ENCODE measurements at regions of chr1 and their contacts with region 1.

Region 1: DNA sequence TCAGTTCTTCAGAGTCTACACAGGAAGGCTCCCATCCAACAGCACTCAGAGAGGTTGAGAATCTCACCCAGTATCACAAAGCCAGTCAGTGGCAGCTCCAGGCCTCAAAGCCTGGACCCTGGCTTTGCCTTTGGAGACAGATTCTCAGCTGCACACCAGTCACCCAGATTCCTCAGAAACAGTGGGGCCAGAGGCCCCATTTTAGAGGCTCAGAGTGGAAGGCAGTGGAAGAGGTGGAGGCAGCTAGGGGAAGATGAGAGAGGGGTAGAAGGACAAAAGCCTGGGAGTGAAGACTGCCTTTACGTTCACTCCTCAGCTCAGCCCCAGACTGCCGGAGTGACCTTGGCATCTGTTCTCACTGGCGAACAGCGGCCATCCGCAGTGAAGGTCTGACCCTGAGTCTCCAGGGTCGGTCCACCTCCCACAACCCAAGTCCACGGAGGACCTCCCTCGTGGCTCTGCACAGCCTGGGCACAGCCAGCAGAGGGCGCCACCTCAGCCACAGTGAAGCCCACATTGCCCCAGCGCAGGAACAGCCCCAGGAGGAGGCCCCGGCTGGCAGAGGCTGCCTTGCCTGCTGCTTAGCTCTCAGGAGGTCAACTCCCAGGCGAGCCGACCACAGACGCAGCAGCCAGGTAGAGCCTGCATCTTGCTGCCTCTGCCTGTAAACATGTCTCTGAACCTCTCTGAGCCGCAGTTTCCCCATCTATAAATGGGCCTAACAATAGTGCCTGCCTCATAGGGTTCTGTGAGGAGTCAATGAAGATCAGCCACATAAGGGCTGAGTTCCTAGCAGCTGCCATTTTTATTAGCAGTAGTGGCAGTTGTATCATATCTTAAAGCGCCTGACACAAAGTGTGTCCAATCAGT is 5.9 kb upstream of the FNDC5 start:
- DNase-seq: peak; percentile 35
- ATAC-seq: peak; percentile 71
- H3K4me3 ChIP-seq: no peak overlapping the region
- H3K27ac ChIP-seq: no peak overlapping the region
- H3K4me1 ChIP-seq: peaks cover 4% of the 10 kb centered on the region
- H3K27me3 ChIP-seq: peaks cover 4% of the 10 kb centered on the region
- CTCF ChIP-seq: peak; percentile 97

Region 2: GRCh38 chr1:32448773-32449456 is 427.7 kb before region 1 on chr1:
- CTCF ChIA-PET with region 1: no interaction called
- POLR2A ChIA-PET with region 1: no interaction called
- in situ Hi-C with region 1: no loop called
- intact Hi-C with region 1: loop called (anchors 10 kb)
- DNase-seq: no peak
- ATAC-seq: peak; percentile 74
- H3K4me3 ChIP-seq: no peak overlapping the region
- H3K27ac ChIP-seq: no peak overlapping the region
- H3K4me1 ChIP-seq: peaks cover 5% of the 10 kb centered on the region; the same call in 1 of the 2 replicates
- H3K27me3 ChIP-seq: no peaks in the 10 kb centered on the region
- CTCF ChIP-seq: peak; percentile 69

Region 3: GRCh38 chr1:32612189-32612881 is 264.2 kb before region 1 on chr1:
- CTCF ChIA-PET with region 1: no interaction called
- POLR2A ChIA-PET with region 1: no interaction called
- in situ Hi-C with region 1: no loop called
- intact Hi-C with region 1: no loop called
- DNase-seq: peak; percentile 69
- ATAC-seq: peak; percentile 100
- H3K4me3 ChIP-seq: peak overlapping the region; percentile 54 to 85
- H3K27ac ChIP-seq: peak overlapping the region; percentile 76
- H3K4me1 ChIP-seq: peaks cover 5% of the 10 kb centered on the region; the same call in 1 of the 2 replicates
- H3K27me3 ChIP-seq: no peaks in the 10 kb centered on the region
- CTCF ChIP-seq: no peak

Region 4: DNA sequence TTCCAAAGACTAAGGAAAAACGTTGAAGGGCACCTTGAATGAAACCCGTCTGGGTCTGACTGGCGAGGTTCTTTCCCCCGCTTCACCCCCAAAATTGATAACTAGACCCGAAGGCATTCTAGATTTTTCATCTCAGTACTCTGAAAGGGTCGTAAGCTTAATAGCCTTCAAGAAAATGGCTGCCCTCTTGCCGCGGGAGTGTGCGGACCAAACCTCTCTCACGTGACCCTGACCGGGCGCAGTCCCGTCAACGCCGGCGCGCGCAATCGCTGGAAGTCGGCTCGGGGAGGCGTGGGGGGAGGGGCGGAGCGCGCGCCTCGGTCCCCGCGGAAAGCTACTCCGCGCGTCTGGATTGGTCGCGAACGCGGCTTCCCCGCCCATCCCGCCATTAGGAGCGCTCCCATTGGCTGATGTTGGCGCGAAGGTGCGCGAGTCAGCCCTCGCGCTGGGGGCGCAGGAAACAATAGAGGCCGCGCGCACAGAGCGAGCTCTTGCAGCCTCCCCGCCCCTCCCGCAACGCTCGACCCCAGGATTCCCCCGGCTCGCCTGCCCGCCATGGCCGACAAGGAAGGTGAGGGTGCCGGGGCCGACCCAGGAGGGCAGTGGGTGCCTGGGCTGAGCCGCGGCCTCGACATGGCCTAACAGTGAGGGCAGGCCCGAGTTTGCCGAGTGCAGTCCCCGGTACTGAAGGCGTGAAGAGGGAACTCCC is 225.7 kb before region 1 on chr1 and contains the start of gene RBBP4:
- CTCF ChIA-PET with region 1: no interaction called
- POLR2A ChIA-PET with region 1: interaction called, 14 read pairs
- in situ Hi-C with region 1: no loop called
- intact Hi-C with region 1: no loop called
- DNase-seq: peak; percentile 83
- ATAC-seq: peak; percentile 96
- H3K4me3 ChIP-seq: peak within 1 kb of the TSS; percentile 93 to 100
- H3K27ac ChIP-seq: peak within 1 kb of the TSS; percentile 99
- H3K4me1 ChIP-seq: peaks cover 10% of the 10 kb centered on the region; the same call in 1 of the 2 replicates
- H3K27me3 ChIP-seq: no peaks in the 10 kb centered on the region
- CTCF ChIP-seq: no peak
- total RNA-seq, gene RBBP4: 376 TPM

Region 5: DNA sequence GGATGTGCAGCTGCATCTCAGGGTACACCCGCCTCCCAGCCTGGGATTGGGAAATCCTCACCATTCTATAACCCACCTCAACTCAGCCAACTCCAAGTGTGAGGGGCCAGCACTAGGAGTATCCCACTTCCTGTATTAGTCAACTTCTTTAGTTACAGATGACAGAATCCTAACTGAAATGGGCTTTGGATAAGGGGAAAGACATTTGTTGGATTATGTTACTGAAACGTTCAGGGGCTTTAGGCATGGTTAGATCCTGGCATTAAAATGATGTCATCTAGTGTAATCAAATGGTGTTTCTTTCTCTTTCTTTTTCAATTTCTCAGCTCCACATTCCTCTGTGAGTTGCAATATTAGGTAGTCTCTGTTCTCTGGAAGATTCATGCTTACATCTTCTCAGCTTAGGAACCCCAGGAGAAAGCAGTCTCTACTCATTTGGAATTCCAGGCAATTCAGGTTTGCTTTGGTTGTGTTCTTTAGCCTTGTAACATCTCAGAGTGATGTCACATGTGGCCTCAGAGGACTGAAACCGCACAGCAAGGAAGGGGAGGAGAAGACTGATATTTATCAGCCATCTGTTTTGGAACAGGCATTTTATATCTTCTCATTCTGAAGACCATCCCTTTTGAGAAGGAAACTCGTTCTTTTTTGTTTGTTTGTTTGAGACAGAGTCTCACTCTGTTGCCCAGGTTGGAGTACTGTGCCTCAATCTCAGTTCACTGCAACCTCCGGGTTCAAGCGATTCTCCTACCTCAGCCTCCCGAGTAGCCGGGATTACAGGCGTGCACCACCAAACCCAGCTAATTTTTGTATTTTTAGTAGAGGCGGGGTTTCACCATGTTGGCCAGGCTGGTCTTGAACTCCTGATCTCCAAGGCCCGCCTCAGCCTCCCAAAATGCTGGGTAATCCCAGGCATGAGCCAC is 43.5 kb after region 1 on chr1:
- CTCF ChIA-PET with region 1: no interaction called
- POLR2A ChIA-PET with region 1: no interaction called
- in situ Hi-C with region 1: no loop called
- intact Hi-C with region 1: no loop called
- DNase-seq: no peak
- ATAC-seq: no peak
- H3K4me3 ChIP-seq: no peak overlapping the region
- H3K27ac ChIP-seq: no peak overlapping the region
- H3K4me1 ChIP-seq: 0 out of 2 replicates have a peak, but pooled peaks cover 3% of the 10 kb centered on the region
- H3K27me3 ChIP-seq: no peaks in the 10 kb centered on the region
- CTCF ChIP-seq: no peak

Region 6: DNA sequence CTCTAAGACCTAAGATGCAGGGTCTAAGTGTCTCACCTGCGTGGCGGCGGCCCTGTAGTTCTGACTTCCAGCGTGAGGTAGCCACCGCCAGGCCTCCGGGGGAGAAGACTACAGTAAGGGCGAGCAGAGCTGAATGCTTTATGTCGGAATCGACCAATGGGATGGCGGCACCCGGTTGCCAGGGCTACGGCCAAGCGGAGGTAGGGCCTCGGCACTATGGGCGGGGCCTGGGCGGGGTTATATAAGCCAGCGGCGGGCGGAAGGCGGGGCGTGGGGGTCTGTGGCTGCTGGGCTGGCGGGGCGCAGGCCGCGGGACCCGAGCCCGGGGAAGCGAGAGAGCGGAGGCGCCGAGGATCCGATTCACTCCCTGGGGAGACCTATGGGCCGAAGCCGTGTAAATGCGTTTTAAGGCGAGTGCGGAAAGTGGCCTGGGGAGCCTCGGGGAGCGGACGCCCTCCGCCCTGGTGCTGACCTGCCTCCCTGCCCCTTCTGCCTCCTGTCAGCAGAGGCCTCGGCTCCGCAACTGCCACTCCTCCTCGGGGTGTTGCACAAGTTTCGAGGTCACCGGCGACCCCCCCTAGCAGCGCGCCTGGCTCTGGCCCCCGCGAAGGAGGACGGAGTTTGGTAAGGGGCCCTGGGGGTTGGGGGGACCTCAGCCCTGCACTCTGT is 204.4 kb after region 1 on chr1 and contains the start of gene AZIN2:
- CTCF ChIA-PET with region 1: interaction called, 8 read pairs
- POLR2A ChIA-PET with region 1: no interaction called
- in situ Hi-C with region 1: no loop called
- intact Hi-C with region 1: loop called (anchors 10 kb)
- DNase-seq: peak; percentile 62
- ATAC-seq: peak; percentile 98
- H3K4me3 ChIP-seq: peak within 1 kb of the TSS; percentile 67 to 91
- H3K27ac ChIP-seq: peak within 1 kb of the TSS; percentile 76
- H3K4me1 ChIP-seq: peaks cover 5% of the 10 kb centered on the region; the same call in 1 of the 2 replicates
- H3K27me3 ChIP-seq: no peaks in the 10 kb centered on the region; the same call in 1 of the 2 replicates
- CTCF ChIP-seq: no peak
- total RNA-seq, gene AZIN2: 2.4 TPM

Measured in Panc1 (cell line).